ENCODE measurements at regions of chr6 and their contacts with region 1.

Region 1: GRCh38 chr6:71510057-71510713 is 221.6 kb downstream of the OGFRL1 start:
- DNase-seq: peak; percentile 27
- ATAC-seq: peak; percentile 57
- H3K4me3 ChIP-seq: no peak overlapping the region
- H3K27ac ChIP-seq: no peak overlapping the region
- H3K4me1 ChIP-seq: no peaks in the 10 kb centered on the region
- H3K27me3 ChIP-seq: no peaks in the 10 kb centered on the region
- CTCF ChIP-seq: peak; percentile 37 to 42 (median 41); a peak in 4 of 6 replicates
- POLR2A ChIP-seq: no peak
- RAD21 ChIP-seq: peak; percentile 67

Region 2: DNA sequence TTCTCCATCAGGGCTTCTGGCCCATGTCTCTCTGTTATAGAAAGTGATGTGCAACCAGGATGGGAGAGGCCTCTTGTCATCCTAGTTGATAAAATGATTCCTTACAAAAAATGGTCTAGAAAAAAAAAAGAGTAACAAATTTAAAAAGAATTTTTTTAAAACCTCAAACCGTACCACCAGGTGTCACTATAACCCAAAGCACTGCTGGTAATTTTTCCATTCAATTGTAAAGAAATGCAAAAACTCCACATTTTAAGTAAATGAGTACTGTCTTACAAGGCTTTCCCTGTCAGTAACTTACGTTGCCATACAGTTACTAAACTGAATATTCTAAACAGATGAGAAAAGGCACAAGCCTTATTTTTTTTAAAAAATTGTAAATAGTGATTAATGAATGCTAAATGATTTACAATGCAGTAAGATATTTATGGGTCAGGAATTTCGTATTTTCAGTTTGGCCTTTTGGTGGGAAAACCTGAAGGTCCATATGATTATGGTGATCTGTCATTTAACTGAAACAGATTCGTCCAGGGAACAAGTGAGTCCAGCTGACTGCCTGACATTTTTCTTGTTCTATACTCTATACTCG is 126.2 kb before region 1 on chr6:
- CTCF ChIA-PET with region 1: interaction called, 14 read pairs
- POLR2A ChIA-PET with region 1: no interaction called
- RAD21 ChIA-PET with region 1: no interaction called
- intact Hi-C with region 1: loop called (anchors 1 kb)
- DNase-seq: peak; percentile 22
- ATAC-seq: no peak
- H3K4me3 ChIP-seq: no peak overlapping the region
- H3K27ac ChIP-seq: no peak overlapping the region
- H3K4me1 ChIP-seq: no peaks in the 10 kb centered on the region; a peak in 1 of 4 replicates
- H3K27me3 ChIP-seq: no peaks in the 10 kb centered on the region
- CTCF ChIP-seq: peak; percentile 45 to 67 (median 60); a peak in 4 of 6 replicates
- POLR2A ChIP-seq: no peak
- RAD21 ChIP-seq: peak; percentile 80

Region 3: DNA sequence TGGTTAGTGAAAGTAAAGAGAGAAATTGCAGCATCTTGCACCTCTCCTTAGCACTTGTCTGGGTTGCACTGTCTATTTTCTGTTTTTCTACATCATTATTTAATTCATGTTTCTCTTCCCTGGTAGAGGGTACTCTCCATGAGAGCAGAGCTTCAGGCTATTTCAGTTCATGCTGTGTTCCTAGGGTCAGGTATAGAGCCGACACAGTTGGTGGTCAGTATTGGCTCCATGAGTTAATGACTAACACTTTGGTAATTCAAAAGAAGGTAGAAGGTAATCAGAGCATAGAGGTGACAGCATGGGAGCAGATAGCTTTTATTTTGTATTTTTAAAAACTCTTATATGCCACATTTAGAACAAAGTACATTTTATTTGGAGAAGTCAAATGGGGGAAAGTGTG is 418.9 kb after region 1 on chr6:
- CTCF ChIA-PET with region 1: no interaction called
- POLR2A ChIA-PET with region 1: no interaction called
- RAD21 ChIA-PET with region 1: no interaction called
- intact Hi-C with region 1: no loop called
- DNase-seq: no peak
- ATAC-seq: no peak
- H3K4me3 ChIP-seq: no peak overlapping the region
- H3K27ac ChIP-seq: no peak overlapping the region
- H3K4me1 ChIP-seq: no peaks in the 10 kb centered on the region
- H3K27me3 ChIP-seq: no peaks in the 10 kb centered on the region
- CTCF ChIP-seq: no peak
- POLR2A ChIP-seq: no peak
- RAD21 ChIP-seq: no peak